Activated CD4-positive, alpha-beta T cell treated with anti-CD3 and anti-CD28 coated beads, Interleukin-2, amount 10 ng/mL, durations not matched to agents 7 days and 5 days (primary cell): ENCODE measurements at regions of chr3 and their contacts with region 1.

Region 1: DNA sequence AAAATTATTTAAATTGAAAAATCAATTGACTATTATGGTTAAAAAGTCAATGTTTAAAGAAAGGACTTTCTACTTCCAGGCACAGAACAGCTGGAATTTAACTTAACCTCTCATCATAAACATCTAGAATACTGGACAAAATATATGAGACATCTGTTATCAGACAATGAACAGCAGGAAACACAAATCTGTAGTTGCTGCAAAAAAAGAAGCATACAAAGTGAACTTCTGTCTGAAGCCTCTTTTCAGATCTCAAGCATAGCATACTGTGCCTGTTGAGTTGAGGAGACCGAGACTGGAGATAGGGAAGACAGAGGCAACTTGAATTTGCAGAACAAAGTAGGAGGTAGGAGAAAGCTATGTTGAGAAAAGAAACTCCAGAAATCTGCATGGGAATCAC is 140.0 kb upstream of the CBLB start:
- DNase-seq: no peak
- H3K4me3 Mint-ChIP-seq: no peak overlapping the region
- H3K27ac Mint-ChIP-seq: no peak overlapping the region
- H3K4me1 Mint-ChIP-seq: peaks cover 16% of the 10 kb centered on the region
- H3K27me3 Mint-ChIP-seq: no peaks in the 10 kb centered on the region

Region 2: GRCh38 chr3:105997800-105998526 is 10.8 kb before region 1 on chr3:
- CTCF ChIA-PET with region 1: interaction called, 10 read pairs
- POLR2A ChIA-PET with region 1: no interaction called
- DNase-seq: no peak
- H3K4me3 Mint-ChIP-seq: no peak overlapping the region
- H3K27ac Mint-ChIP-seq: no peak overlapping the region
- H3K4me1 Mint-ChIP-seq: no peaks in the 10 kb centered on the region
- H3K27me3 Mint-ChIP-seq: no peaks in the 10 kb centered on the region